Breast epithelium (tissue), 4 donors: ENCODE measurements at regions of chr18 and their contacts with region 1.

Region 1: GRCh38 chr18:11437046-11437445 is 172.3 kb upstream of the SLC35G4 start:
- DNase-seq: no peak
- H3K4me3 ChIP-seq: no peak overlapping the region
- H3K27ac ChIP-seq: no peak overlapping the region
- H3K4me1 ChIP-seq: no peaks in the 10 kb centered on the region
- H3K27me3 ChIP-seq: no peaks in the 10 kb centered on the region
- CTCF ChIP-seq: no peak
- POLR2A ChIP-seq: no peak

Region 2: DNA sequence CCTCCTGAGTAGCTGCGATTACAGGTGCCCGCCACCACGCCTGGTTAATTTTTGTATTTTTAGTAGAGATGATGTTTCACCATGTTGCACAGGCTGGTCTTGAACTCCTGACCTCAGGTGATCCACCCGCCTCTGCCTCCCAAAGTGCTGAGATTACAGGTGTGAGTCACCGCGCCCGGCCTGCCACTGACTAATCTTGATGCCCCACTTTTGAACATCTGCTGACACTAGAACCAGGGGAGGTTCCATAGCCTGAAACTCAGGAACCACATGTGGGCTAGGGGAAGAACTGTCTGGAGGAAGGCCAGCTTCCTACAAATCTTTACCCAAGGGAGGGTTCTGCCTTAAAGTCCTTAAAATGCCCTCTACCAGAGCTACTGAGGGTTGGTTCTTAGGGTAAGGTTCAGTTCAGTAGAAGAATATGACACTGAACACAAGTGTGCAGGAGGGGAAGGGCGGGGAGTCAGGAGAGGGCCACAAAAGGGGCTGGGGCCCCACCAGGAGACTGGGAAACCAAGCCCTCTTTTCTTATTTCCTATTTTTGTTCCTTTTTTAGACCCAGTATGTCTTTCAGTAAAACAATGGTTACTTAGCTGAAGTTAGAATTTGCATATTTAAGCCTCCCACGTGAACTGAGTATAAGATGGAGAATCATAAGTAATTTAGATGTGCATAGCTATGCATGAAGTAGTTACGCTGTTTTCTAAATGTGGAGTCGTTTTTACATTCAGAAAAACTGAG is 1735.3 kb before region 1 on chr18:
- intact Hi-C with region 1: no loop called
- DNase-seq: no peak
- H3K4me3 ChIP-seq: no peak overlapping the region
- H3K27ac ChIP-seq: no peak overlapping the region
- H3K4me1 ChIP-seq: no peaks in the 10 kb centered on the region
- H3K27me3 ChIP-seq: no peaks in the 10 kb centered on the region
- CTCF ChIP-seq: no peak
- POLR2A ChIP-seq: no peak

Region 3: GRCh38 chr18:10912790-10913545 is 524.1 kb before region 1 on chr18:
- intact Hi-C with region 1: no loop called
- DNase-seq: no peak
- H3K4me3 ChIP-seq: no peak overlapping the region
- H3K27ac ChIP-seq: peak overlapping the region in 1 of 2 donors; percentile 30
- H3K4me1 ChIP-seq: no peaks in the 10 kb centered on the region
- H3K27me3 ChIP-seq: no peaks in the 10 kb centered on the region
- CTCF ChIP-seq: no peak
- POLR2A ChIP-seq: no peak

Region 4: DNA sequence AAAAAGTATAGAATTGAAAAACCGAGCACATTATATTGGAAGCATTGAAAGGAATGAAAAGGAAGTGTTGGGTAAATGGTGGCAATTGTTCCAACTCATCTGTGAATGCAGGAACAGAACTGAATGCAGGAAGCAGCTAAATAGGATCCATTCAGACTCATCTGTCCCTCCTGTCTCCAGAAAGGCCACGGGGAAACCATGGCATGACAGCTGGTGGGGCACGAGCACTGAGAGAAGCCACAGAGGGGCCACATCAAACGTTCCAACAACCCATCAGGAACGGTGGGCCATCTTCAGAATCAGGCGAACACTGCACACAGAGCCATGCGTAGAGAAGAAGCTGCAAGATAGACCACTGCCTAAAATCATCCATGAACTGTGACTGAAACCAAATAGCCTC is 33.9 kb after region 1 on chr18:
- intact Hi-C with region 1: no loop called
- DNase-seq: no peak
- H3K4me3 ChIP-seq: no peak overlapping the region
- H3K27ac ChIP-seq: no peak overlapping the region
- H3K4me1 ChIP-seq: no peaks in the 10 kb centered on the region
- H3K27me3 ChIP-seq: no peaks in the 10 kb centered on the region
- CTCF ChIP-seq: no peak
- POLR2A ChIP-seq: no peak

Region 5: DNA sequence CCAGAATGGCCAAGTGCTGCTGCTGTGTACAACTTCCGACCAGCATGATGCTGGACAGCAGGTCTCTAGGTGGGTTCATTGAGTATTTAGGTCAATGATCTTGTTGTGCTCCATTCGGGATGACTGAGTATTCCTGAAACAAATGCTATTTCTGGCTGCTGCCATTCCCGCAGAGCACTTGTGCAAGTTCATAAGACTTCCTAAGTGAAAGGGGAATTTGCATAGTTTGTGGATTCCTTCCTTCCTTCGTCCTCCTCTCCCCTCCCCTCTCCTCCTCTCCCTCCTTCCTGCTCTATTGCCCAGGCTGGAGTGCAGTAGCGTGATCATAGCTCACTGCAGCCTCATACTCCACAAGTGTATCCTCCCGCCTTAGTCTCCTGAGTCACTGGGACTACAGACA is 1821.9 kb after region 1 on chr18:
- intact Hi-C with region 1: loop called (anchors 10 kb)
- DNase-seq: no peak
- H3K4me3 ChIP-seq: no peak overlapping the region
- H3K27ac ChIP-seq: no peak overlapping the region
- H3K4me1 ChIP-seq: peaks cover 0 to 14% of the 10 kb centered on the region in 2 donors
- H3K27me3 ChIP-seq: no peaks in the 10 kb centered on the region
- CTCF ChIP-seq: no peak
- POLR2A ChIP-seq: no peak